HCT116 (cell line): ENCODE measurements at regions of chr17 and their contacts with region 1.

Region 1: DNA sequence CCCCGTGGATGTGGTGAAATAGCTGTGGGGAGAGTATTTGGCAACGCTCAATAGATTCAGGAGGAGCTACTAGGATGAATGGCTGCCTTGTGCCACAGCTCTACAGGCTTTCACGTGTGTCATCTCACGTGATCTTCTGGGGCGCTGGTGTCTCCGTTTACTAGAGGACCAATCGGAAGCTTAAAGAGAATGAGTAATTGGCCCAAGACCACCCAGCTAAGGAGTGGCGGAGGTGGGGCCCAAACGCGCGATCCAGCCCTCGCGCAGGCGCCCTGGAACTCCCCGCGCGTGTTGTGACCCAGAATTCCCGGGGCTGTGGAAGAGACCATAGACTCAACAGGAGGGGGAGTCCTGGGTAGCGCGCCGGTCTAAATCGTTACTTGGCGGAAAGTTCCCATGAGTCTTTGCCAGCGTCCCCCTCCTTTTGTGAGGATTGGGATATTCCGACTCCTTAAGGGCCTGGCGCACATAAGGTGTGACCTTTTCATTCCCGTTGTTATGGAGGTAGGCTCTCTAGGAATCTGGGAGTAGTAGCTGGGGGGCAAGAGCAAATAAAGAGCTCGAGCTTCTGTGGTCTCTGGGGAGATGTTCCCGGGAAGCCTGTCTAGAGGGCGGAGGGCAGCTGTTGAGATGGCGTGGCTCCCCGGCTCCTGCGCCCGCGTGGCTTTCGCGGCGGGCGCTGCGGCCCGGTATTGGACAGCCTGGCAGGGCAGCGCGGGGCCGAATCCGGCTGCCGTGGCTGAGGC is 23.4 kb downstream of the TRPV2 start:
- DNase-seq: peak; percentile 99
- ATAC-seq: peak; percentile 80
- H3K4me3 ChIP-seq: peak overlapping the region; percentile 94 to 99
- H3K27ac ChIP-seq: peak overlapping the region; percentile 97
- H3K4me1 ChIP-seq: peaks cover 10 to 47% of the 10 kb centered on the region in 2 experiments; a peak in 3 of 4 replicates
- H3K27me3 ChIP-seq: no peaks in the 10 kb centered on the region
- CTCF ChIP-seq: no peak
- POLR2A ChIP-seq: peak; percentile 98
- RAD21 ChIP-seq: no peak

Region 2: DNA sequence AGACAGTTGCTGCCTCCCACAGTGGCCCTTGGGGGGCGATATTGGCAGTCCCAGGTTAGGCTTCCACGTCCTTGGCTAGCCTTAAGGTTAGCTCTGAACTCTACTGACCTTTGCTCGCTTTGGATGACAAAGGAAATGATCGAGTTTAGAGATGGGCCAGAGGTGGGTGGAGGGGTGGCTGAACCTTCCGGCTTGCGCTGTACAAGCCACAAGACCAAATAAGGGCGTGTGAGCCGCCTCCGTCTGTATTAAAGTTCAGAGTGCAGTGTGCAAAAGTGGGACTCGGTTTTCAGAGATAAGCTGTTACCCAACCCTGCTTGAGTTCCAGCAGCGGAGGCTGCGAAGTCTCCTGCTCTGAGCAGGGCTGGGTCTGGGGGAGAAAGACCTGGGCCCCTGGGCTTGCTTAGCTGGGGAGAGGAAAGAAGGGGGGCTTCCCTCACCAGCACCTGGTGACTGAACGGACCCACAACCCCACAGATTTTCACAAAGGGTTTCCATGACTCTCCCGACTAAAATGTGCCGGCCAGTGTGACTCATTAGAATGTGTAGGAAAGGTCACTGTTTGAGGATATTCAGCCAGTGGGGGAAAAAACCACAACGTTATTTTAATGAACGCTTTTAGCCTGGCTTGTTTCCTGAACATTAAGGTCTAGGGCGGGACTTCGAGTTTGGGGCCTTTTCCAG is 152.6 kb before region 1 on chr17:
- CTCF ChIA-PET with region 1: interaction called, 6 read pairs
- POLR2A ChIA-PET with region 1: interaction called, 13 read pairs
- RAD21 ChIA-PET with region 1: interaction called in 1 of 2 experiments, 3 read pairs
- intact Hi-C with region 1: loop called (anchors 5 kb)
- DNase-seq: peak; percentile 95
- ATAC-seq: peak; percentile 84
- H3K4me3 ChIP-seq: peak overlapping the region; percentile 37 to 57
- H3K27ac ChIP-seq: peak overlapping the region; percentile 97
- H3K4me1 ChIP-seq: peaks cover 76 to 77% of the 10 kb centered on the region in 2 experiments
- H3K27me3 ChIP-seq: no peaks in the 10 kb centered on the region
- CTCF ChIP-seq: peak; percentile 23 to 70 (median 67); a peak in 5 of 6 replicates
- POLR2A ChIP-seq: peak; percentile 55
- RAD21 ChIP-seq: peak; percentile 68

Region 3: GRCh38 chr17:16304830-16305229 is 133.9 kb before region 1 on chr17:
- CTCF ChIA-PET with region 1: no interaction called
- POLR2A ChIA-PET with region 1: no interaction called
- RAD21 ChIA-PET with region 1: no interaction called
- intact Hi-C with region 1: loop called (anchors 5 kb)
- DNase-seq: no peak
- ATAC-seq: peak; percentile 86
- H3K4me3 ChIP-seq: no peak overlapping the region
- H3K27ac ChIP-seq: no peak overlapping the region
- H3K4me1 ChIP-seq: peaks cover 7 to 14% of the 10 kb centered on the region in 2 experiments
- H3K27me3 ChIP-seq: no peaks in the 10 kb centered on the region
- CTCF ChIP-seq: peak; percentile 32 to 56 (median 51); a peak in 5 of 6 replicates
- POLR2A ChIP-seq: no peak
- RAD21 ChIP-seq: peak; percentile 62

Region 4: DNA sequence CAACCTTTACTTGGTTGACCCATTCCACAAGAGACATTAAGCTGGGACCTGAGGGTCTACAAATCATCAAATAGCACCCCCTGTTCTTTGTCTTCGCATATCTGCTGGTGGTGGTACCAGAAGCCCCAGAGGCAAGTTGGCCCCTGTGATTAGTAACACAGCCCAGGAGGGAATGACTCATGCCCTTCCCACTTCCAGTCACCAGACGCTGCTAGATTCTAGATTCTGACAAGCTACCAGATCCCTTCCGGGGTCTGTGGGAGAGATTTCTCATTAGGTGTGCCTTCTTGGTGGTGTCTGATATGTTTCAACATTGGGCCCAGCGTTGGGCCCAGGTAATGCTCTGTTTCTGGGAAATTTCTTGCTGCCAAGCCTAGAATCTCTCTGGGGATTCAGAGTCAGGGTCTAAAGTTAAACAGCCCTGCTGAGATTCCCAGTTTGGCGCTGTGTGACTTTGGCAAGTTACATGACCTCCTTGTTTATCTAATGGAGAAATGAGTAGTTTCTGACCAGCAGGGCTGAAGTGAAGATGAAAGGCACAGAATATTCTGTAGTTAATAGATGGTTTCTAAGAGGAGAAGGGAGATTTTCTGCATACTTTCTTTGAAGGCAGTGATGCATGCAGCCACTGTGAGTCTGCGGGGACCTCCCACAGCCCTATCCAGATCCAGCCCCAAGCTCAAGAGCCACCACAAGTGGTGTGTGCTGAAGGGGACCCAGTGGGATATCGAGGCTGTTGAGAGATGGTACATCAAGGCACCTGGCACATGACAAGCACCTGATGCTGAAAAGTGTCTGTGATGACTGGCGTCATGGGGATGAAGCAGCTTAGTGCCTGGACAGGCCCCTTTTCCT is 19.4 kb before region 1 on chr17:
- CTCF ChIA-PET with region 1: no interaction called
- POLR2A ChIA-PET with region 1: interaction called, 30 read pairs
- RAD21 ChIA-PET with region 1: interaction called in 1 of 2 experiments, 3 read pairs
- intact Hi-C with region 1: no loop called
- DNase-seq: no peak
- ATAC-seq: peak; percentile 69
- H3K4me3 ChIP-seq: peak overlapping the region in 1 of 2 experiments; percentile 32; a peak in 2 of 4 replicates
- H3K27ac ChIP-seq: peak overlapping the region; percentile 81
- H3K4me1 ChIP-seq: peaks cover 40 to 47% of the 10 kb centered on the region in 2 experiments
- H3K27me3 ChIP-seq: no peaks in the 10 kb centered on the region
- CTCF ChIP-seq: no peak
- POLR2A ChIP-seq: no peak
- RAD21 ChIP-seq: no peak

Region 5: DNA sequence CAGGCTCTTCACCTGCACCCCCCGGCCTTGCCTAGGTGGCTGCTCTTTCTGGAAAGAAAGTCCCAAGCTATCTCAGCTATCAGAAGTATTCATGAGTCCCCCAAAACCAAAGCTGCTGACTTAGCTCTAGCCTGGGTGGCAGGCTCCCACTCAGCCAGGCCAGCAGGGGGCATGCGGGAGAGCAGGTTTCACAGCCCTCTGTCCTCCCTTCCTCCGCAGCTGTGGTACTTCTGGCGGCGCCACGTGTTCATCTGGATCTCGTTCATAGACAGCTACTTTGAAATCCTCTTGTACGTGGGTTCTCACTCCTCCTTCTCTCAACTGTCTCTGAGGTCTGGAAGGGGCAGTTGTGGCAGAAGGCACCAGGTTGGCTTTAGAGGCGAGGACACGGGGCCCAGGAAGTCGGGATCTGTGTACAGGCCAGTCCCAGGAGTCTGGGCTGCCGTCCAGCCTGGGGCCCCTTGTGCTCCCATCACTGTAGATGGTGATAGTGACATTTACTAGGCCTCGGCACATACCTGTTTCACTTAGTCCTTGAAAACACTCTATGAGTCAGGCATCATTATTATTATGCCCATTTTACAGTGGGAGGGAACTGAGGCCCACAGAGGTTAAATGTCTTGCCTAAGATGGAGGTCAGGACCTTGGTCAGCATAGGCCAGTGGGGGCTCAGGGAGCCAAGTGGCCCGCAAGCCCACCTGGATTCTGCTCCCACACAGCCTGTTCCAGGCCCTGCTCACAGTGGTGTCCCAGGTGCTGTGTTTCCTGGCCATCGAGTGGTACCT is 10.4 kb before region 1 on chr17:
- CTCF ChIA-PET with region 1: interaction called, 52 read pairs
- POLR2A ChIA-PET with region 1: interaction called, 93 read pairs
- RAD21 ChIA-PET with region 1: interaction called in 1 of 2 experiments, 3 read pairs
- intact Hi-C with region 1: no loop called
- DNase-seq: no peak
- ATAC-seq: peak; percentile 97
- H3K4me3 ChIP-seq: no peak overlapping the region
- H3K27ac ChIP-seq: no peak overlapping the region
- H3K4me1 ChIP-seq: peaks cover 2 to 10% of the 10 kb centered on the region in 2 experiments; a peak in 3 of 4 replicates
- H3K27me3 ChIP-seq: no peaks in the 10 kb centered on the region
- CTCF ChIP-seq: peak; percentile 74 to 93 (median 80)
- POLR2A ChIP-seq: peak; percentile 22
- RAD21 ChIP-seq: no peak; the same call in none of the 2 replicates

Region 6: DNA sequence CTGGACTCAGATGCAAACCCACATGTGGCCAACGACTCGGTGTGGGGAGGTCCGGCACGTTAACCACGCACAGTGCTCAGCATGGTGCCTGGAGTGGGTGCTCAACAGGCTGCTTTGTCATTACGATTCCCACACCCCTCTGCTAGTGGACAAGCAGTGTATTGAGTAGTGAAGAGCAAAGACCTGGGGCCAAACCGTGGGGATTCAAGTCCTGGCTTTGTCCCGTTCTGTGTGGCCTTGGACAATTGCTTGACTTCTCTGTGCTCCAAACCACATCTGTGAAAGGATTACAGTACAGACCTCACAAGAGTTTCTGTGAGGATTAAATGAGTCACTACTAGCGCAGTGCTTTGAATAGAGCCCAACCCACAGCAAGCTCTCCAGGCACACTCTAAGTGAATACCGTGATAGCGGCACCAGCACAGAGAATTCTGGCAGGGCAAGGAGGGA is 10.4 kb after region 1 on chr17:
- CTCF ChIA-PET with region 1: interaction called, 5 read pairs
- POLR2A ChIA-PET with region 1: interaction called, 10 read pairs
- RAD21 ChIA-PET with region 1: no interaction called
- intact Hi-C with region 1: no loop called
- DNase-seq: no peak
- ATAC-seq: no peak
- H3K4me3 ChIP-seq: no peak overlapping the region
- H3K27ac ChIP-seq: no peak overlapping the region
- H3K4me1 ChIP-seq: peaks cover 0 to 27% of the 10 kb centered on the region in 2 experiments; a peak in 2 of 4 replicates
- H3K27me3 ChIP-seq: no peaks in the 10 kb centered on the region
- CTCF ChIP-seq: no peak
- POLR2A ChIP-seq: no peak
- RAD21 ChIP-seq: no peak

Region 7: GRCh38 chr17:16463358-16464302 is 24.9 kb after region 1 on chr17:
- CTCF ChIA-PET with region 1: no interaction called
- POLR2A ChIA-PET with region 1: interaction called, 29 read pairs
- RAD21 ChIA-PET with region 1: no interaction called
- intact Hi-C with region 1: no loop called
- DNase-seq: no peak
- ATAC-seq: peak; percentile 80
- H3K4me3 ChIP-seq: no peak overlapping the region
- H3K27ac ChIP-seq: no peak overlapping the region
- H3K4me1 ChIP-seq: peaks cover 8 to 26% of the 10 kb centered on the region in 2 experiments; a peak in 3 of 4 replicates
- H3K27me3 ChIP-seq: no peaks in the 10 kb centered on the region
- CTCF ChIP-seq: peak in 2 of 3 experiments; percentile 20; a peak in 2 of 6 replicates
- POLR2A ChIP-seq: no peak
- RAD21 ChIP-seq: no peak